Sigmoid colon (tissue), 7 donors: ENCODE measurements at regions of chr7 and their contacts with region 1.

Region 1: GRCh38 chr7:119783799-119784198 is 489.2 kb upstream of the KCND2 start:
- DNase-seq: no peak
- H3K4me3 ChIP-seq: no peak overlapping the region
- H3K27ac ChIP-seq: no peak overlapping the region
- H3K4me1 ChIP-seq: no peaks in the 10 kb centered on the region
- H3K27me3 ChIP-seq: no peaks in the 10 kb centered on the region
- CTCF ChIP-seq: no peak
- EP300 ChIP-seq: no peak
- POLR2A ChIP-seq: no peak

Region 2: DNA sequence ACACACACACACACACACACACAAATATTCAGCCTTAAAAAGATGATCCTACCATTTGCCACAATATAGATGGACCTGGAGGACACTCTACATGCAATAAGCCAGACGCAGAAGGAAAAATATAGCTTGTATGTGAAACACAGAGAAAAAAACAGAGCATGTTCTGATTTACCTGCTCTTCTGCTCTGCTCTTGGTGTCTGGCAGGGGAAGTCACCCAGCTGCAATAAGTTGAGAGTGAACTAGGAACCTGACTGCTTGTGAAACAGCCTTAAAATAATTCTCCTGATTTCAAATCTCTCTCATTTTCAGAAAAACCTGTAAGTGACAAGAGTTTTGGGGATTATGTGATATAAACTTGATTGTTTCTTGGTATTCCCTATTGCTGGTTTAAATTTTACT is 458.2 kb after region 1 on chr7:
- intact Hi-C with region 1: loop called (anchors 5 kb)
- DNase-seq: no peak
- H3K4me3 ChIP-seq: no peak overlapping the region
- H3K27ac ChIP-seq: no peak overlapping the region
- H3K4me1 ChIP-seq: no peaks in the 10 kb centered on the region
- H3K27me3 ChIP-seq: no peaks in the 10 kb centered on the region
- CTCF ChIP-seq: no peak
- EP300 ChIP-seq: no peak
- POLR2A ChIP-seq: no peak